Activated CD4-positive, alpha-beta memory T cell treated with anti-CD3 and anti-CD28 coated beads for 36 hours (primary cell): ENCODE measurements at regions of chr15 and their contacts with region 1.

Region 1: DNA sequence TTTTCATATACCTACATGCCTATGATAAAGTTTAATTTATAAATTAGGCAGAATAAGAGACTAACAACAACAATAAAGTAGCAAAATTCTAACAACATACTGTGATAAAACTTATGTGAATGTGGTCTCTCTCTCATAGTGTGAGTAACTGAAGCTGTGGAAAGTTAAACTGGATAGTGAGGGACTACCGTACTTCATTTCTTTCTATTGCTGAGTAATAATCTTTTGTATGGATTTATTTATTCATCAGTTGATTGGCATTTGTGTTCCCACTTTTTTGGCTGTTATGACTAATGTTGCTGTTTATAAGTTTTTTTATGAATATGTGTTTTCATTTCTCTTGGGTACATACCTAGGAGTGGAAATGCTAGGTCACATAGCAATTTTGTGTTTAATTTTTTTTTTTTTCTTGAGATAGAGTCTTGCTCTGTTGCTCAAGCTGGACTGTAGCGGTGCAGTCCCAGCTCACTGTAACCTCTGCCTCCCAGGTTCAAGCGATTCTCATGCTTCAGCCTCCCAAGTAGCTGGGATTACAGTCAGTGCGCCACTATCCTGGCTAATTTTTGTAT is 41.0 kb downstream of the RNF111 start:
- DNase-seq: no peak
- H3K4me3 Mint-ChIP-seq: no peak overlapping the region
- H3K27ac Mint-ChIP-seq: no peak overlapping the region
- H3K4me1 Mint-ChIP-seq: peaks cover 37% of the 10 kb centered on the region
- H3K27me3 Mint-ChIP-seq: no peaks in the 10 kb centered on the region

Region 2: DNA sequence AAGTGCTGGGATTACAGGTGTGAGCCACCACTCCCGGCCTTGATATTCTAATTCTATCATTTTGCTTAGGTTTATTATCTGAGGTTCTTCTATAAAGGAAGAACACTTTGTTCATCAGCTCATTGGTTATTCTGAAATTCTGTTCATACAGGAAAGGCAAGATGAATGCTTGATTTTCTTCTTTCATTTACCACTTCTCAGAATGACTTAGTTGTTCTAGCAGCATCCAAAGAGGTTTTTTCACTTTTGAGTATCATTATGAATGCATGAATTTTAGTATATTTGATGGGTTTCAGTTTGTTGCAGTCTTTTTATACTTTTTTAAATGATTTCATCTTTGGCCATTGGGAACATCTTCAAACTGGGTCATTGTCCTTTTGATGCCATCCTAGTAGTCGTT is 10.8 kb after region 1 on chr15:
- CTCF ChIA-PET with region 1: interaction called, 3 read pairs
- POLR2A ChIA-PET with region 1: no interaction called
- intact Hi-C with region 1: loop called (anchors 1 kb)
- DNase-seq: no peak
- H3K4me3 Mint-ChIP-seq: no peak overlapping the region
- H3K27ac Mint-ChIP-seq: peak overlapping the region; percentile 40
- H3K4me1 Mint-ChIP-seq: peaks cover 47% of the 10 kb centered on the region
- H3K27me3 Mint-ChIP-seq: no peaks in the 10 kb centered on the region

Region 3: DNA sequence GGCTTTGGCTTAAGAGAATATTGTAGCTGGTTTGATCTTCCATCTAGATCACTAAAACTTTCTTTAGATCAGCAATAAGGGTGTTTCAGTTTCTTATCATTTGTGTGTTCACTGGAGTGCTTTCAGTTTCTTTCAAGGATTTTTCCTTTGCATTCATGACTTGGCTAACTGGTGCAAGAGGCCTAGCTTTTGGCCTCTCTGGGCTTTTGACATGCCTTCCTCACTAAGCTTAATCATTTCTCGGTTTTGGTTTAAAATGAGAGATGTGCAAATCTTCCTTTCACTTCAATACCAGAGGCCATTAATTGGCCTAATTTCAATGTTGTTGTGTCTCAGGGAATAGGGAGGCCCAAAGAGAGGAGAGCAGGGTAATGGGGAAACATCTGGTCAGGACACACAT is 46.1 kb after region 1 on chr15:
- CTCF ChIA-PET with region 1: no interaction called
- POLR2A ChIA-PET with region 1: no interaction called
- intact Hi-C with region 1: loop called (anchors 5 kb)
- DNase-seq: no peak
- H3K4me3 Mint-ChIP-seq: no peak overlapping the region
- H3K27ac Mint-ChIP-seq: peak overlapping the region; percentile 57
- H3K4me1 Mint-ChIP-seq: peaks cover 14% of the 10 kb centered on the region
- H3K27me3 Mint-ChIP-seq: no peaks in the 10 kb centered on the region

Region 4: GRCh38 chr15:59138243-59138642 is 109.8 kb after region 1 on chr15:
- CTCF ChIA-PET with region 1: no interaction called
- POLR2A ChIA-PET with region 1: no interaction called
- intact Hi-C with region 1: no loop called
- DNase-seq: peak; percentile 72
- H3K4me3 Mint-ChIP-seq: no peak overlapping the region
- H3K27ac Mint-ChIP-seq: no peak overlapping the region
- H3K4me1 Mint-ChIP-seq: peaks cover 24% of the 10 kb centered on the region
- H3K27me3 Mint-ChIP-seq: no peaks in the 10 kb centered on the region